ENCODE measurements at regions of chr17 and their contacts with region 1.

Region 1: GRCh38 chr17:35969558-35970380 is 11.5 kb downstream of the CCL16 start:
- DNase-seq: peak; percentile 84 to 93
- H3K4me3 ChIP-seq: no peak overlapping the region
- H3K27ac ChIP-seq: no peak overlapping the region
- H3K4me1 ChIP-seq: peaks cover 4 to 15% (median 11%) of the 10 kb centered on the region in 4 donors
- H3K27me3 ChIP-seq: no peaks in the 10 kb centered on the region
- CTCF ChIP-seq: peak in 5 of 7 experiments; percentile 53 to 87 (median 82)
- EP300 ChIP-seq: no peak
- POLR2A ChIP-seq: no peak

Region 2: GRCh38 chr17:36072431-36073121 is 102.8 kb after region 1 on chr17:
- intact Hi-C with region 1: loop called (anchors 10 kb)
- DNase-seq: peak; percentile 62 to 73
- H3K4me3 ChIP-seq: no peak overlapping the region
- H3K27ac ChIP-seq: no peak overlapping the region
- H3K4me1 ChIP-seq: no peaks in the 10 kb centered on the region
- H3K27me3 ChIP-seq: no peaks in the 10 kb centered on the region
- CTCF ChIP-seq: peak in 5 of 7 experiments; percentile 21 to 79 (median 58)
- EP300 ChIP-seq: no peak
- POLR2A ChIP-seq: no peak

Region 3: GRCh38 chr17:36148559-36149295 is 179.0 kb after region 1 on chr17:
- intact Hi-C with region 1: loop called (anchors 10 kb)
- DNase-seq: peak; percentile 70 to 86
- H3K4me3 ChIP-seq: no peak overlapping the region
- H3K27ac ChIP-seq: no peak overlapping the region
- H3K4me1 ChIP-seq: peaks cover 0 to 12% (median 3%) of the 10 kb centered on the region in 4 donors
- H3K27me3 ChIP-seq: peaks cover 0 to 42% (median 5%) of the 10 kb centered on the region in 3 donors
- CTCF ChIP-seq: peak in 6 of 7 experiments; percentile 12 to 98 (median 94)
- EP300 ChIP-seq: no peak
- POLR2A ChIP-seq: no peak